AG04449 (cell line): ENCODE measurements at regions of chr19 and their contacts with region 1.

Region 1: DNA sequence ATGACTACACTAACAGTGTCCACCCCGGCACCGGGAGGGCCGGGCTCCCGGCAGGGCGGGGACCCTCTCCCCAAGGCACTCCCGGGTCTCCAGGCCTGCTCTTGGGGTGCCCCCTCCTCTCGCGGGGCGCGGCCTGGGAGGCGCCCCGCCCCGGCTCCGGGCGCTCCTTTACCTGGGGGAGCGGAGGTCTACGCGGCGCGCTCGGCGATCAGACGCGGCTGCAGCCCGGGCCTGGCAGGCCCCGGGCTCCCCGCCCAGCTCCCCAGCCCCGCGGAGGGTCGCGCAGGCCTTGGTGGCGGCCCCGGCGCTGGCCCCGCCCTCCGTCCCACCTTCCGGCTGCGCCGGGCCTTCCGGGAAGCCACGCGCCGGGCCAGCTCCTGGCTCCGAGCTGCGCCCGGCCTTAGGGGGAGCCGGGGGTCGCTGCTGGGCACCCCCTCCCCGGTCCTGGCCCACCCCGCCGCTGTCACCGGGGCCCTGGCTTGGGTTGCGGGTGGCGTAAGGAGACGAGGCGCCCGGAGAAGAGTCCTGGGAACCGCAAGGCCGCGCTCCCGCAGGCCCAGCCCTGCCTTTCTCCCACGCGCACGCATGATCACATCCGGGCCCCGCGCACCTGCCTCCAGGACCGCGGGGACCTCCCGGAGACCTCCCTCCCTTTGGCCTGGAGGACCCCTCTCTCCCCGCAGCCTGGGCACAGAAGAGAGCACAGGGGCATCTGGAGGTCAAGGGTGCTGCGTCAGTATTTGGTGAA is at the start of gene C19orf12:
- DNase-seq: no peak
- H3K4me3 ChIP-seq: peak within 1 kb of the TSS; percentile 82
- CTCF ChIP-seq: no peak

Region 2: GRCh38 chr19:29665215-29665825 is 49.8 kb before region 1 on chr19 and contains the start of gene PLEKHF1:
- CTCF ChIA-PET with region 1: interaction called, 24 read pairs
- POLR2A ChIA-PET with region 1: interaction called, 3 read pairs
- DNase-seq: no peak
- H3K4me3 ChIP-seq: peak within 1 kb of the TSS; percentile 82
- CTCF ChIP-seq: no peak

Region 3: GRCh38 chr19:29687244-29687896 is 27.8 kb before region 1 on chr19:
- CTCF ChIA-PET with region 1: interaction called, 87 read pairs
- POLR2A ChIA-PET with region 1: no interaction called
- DNase-seq: peak; percentile 75
- H3K4me3 ChIP-seq: peak overlapping the region; percentile 13
- CTCF ChIP-seq: no peak

Region 4: DNA sequence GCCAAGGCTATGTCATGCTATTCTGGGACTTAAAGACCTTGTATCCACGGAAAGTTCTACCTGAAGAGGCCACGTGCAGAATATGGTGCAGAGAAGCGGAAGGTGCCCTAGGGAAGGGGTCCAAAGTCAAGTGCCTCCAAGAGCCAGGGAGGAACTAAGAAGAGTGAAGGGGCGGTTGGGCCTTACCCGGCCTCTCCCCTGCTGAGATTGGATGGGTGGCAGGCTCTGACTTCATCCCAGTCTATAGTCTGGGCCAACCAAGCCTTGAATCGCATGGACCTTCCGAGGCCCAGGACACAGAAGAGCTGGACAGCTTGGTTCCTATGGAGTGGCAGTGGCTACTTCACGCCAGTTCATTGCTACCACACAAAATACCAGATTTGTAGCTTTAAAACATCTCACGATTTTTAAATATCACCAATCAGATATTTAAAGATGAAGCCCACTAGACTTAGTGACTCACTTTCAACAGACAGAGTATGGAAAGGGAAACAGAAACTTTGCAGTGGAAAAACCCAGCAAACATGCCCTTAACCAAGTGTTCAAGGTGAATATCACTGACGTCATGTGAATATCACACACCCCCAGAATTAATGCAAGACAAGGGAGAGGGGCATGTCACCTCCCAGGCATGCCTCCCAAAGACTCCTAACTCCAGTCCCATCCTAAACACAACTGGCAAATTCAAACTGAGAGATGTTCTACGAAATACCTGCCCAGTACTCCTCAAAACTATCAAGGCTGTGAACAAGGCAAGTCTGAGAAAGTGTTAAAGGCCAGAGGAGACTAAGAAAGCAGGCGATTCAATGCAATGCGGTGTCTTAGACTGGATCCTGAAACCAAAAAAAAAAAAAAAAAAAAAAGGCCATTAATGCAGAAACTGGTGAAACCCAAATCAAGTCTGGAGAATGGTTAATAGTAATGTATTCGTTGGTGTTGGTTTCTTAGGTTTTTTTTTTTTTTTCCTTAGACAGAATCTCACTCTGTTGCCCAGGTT is 10.3 kb before region 1 on chr19:
- CTCF ChIA-PET with region 1: interaction called, 29 read pairs
- POLR2A ChIA-PET with region 1: no interaction called
- DNase-seq: no peak
- H3K4me3 ChIP-seq: no peak overlapping the region
- CTCF ChIP-seq: no peak